ENCODE measurements at regions of chr2 and their contacts with region 1.

Region 1: DNA sequence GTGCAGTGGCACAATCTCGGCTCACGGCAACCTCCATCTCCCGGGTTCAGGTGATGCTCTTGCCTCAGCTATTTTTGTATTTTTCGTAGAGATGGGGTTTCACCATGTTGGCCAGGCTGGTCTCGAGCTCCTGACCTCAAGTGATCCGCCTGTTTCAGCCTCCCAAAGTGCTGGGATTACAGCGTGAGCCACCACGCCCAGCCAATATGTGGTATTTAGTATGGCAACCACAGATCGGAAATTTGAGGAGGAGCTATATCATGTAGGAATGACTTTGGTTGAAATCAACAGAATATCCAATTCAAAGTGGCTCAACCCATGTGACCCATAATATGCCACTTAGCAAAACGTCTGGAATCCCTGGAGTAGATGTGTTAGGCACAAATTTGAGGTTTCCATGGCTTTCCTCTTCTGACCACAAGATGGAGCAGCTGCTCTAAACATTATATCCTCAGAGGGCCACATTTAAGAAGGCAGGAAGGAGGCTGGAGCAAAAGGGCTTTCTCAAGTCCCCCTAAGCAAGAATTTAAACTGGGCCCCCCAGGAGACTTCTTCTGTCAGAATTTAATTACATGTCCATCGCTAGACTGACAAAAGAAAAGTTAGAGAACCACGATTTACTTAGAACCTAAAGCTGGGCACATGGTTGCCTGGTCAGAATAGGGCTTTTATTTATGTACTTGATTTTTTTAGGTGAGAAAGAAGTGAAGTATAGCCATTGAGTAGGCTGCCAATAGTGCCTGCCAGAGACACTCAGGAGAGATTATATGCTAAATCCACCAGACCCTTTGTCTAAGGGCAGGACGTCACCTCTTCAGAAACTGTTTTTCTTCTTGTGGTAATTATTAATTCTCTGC is 49.6 kb upstream of the ITSN2 start:
- DNase-seq: peak; percentile 43
- H3K4me3 ChIP-seq: no peak overlapping the region
- H3K27ac ChIP-seq: no peak overlapping the region
- H3K27me3 ChIP-seq: peaks cover 4% of the 10 kb centered on the region
- CTCF ChIP-seq: peak; percentile 92

Region 2: GRCh38 chr2:24399434-24400206 is 10.3 kb before region 1 on chr2:
- CTCF ChIA-PET with region 1: interaction called, 10 read pairs
- POLR2A ChIA-PET with region 1: no interaction called
- DNase-seq: no peak
- H3K4me3 ChIP-seq: no peak overlapping the region
- H3K27ac ChIP-seq: no peak overlapping the region
- H3K27me3 ChIP-seq: peaks cover 10% of the 10 kb centered on the region
- CTCF ChIP-seq: no peak

Region 3: GRCh38 chr2:24421668-24422067 is 11.7 kb after region 1 on chr2:
- CTCF ChIA-PET with region 1: interaction called, 28 read pairs
- POLR2A ChIA-PET with region 1: no interaction called
- DNase-seq: no peak
- H3K4me3 ChIP-seq: no peak overlapping the region
- H3K27ac ChIP-seq: no peak overlapping the region
- H3K27me3 ChIP-seq: peaks cover 5% of the 10 kb centered on the region
- CTCF ChIP-seq: peak; percentile 49

Region 4: GRCh38 chr2:24792874-24793760 is 383.2 kb after region 1 on chr2 and contains the starts of genes CENPO and PTRHD1:
- CTCF ChIA-PET with region 1: interaction called, 11 read pairs
- POLR2A ChIA-PET with region 1: no interaction called
- DNase-seq: peak; percentile 93
- H3K4me3 ChIP-seq: peak within 1 kb of the TSS; percentile 97
- H3K27ac ChIP-seq: peak within 1 kb of the TSS; percentile 94
- H3K27me3 ChIP-seq: no peaks in the 10 kb centered on the region
- CTCF ChIP-seq: peak; percentile 69
- polyA plus RNA-seq, gene CENPO: 12.1 and 15.7 TPM in 2 replicates
- polyA plus RNA-seq, gene PTRHD1: 42.5 and 51.5 TPM in 2 replicates

Region 5: DNA sequence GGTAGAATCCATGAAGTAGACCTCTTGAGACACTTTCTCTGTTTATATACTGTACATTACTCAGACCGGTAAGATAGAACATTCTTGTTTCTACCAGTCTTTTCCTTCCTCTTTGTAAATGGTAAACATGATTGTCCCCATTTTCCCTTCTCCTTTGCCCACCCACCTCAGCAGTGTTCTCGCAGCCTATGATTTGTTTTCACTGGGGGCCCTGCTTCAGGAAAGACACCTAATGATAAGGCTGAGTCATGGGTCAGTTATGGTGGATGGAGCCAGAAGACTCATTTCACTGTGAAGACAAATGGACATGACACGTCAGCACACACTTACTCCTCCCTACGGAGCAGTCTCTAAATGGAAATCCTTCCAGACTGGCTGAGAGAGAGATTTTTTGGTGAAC is 407.0 kb after region 1 on chr2:
- CTCF ChIA-PET with region 1: interaction called, 12 read pairs
- POLR2A ChIA-PET with region 1: no interaction called
- DNase-seq: peak; percentile 56
- H3K4me3 ChIP-seq: no peak overlapping the region
- H3K27ac ChIP-seq: peak overlapping the region; percentile 62
- H3K27me3 ChIP-seq: no peaks in the 10 kb centered on the region
- CTCF ChIP-seq: no peak

Region 6: GRCh38 chr2:24827321-24828237 is 417.7 kb after region 1 on chr2:
- CTCF ChIA-PET with region 1: interaction called, 145 read pairs
- POLR2A ChIA-PET with region 1: no interaction called
- DNase-seq: peak; percentile 81
- H3K4me3 ChIP-seq: no peak overlapping the region
- H3K27ac ChIP-seq: no peak overlapping the region
- H3K27me3 ChIP-seq: no peaks in the 10 kb centered on the region
- CTCF ChIP-seq: peak; percentile 95

Region 7: DNA sequence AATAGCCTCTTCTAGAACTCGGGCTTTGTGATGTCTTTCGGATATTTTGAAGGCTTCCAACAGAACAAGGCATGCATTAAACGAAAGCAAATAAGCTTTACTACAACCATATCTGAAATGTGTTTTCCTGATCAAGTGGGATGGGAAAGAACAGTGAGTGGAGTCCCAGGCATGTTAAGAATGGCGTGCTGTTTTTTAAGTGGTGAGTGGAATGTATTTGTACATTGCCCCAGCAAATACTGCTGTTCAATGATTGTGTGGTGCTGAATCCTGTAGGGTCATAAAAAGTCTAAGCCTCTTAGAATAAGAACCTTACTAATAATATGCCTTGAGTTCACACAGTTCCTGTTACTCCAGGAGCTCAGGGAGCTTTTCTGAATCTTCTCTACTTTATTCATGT is 706.0 kb after region 1 on chr2:
- CTCF ChIA-PET with region 1: no interaction called
- POLR2A ChIA-PET with region 1: no interaction called
- DNase-seq: peak; percentile 23
- H3K4me3 ChIP-seq: no peak overlapping the region
- H3K27ac ChIP-seq: no peak overlapping the region
- H3K27me3 ChIP-seq: peaks cover 2% of the 10 kb centered on the region
- CTCF ChIP-seq: no peak

Region 8: DNA sequence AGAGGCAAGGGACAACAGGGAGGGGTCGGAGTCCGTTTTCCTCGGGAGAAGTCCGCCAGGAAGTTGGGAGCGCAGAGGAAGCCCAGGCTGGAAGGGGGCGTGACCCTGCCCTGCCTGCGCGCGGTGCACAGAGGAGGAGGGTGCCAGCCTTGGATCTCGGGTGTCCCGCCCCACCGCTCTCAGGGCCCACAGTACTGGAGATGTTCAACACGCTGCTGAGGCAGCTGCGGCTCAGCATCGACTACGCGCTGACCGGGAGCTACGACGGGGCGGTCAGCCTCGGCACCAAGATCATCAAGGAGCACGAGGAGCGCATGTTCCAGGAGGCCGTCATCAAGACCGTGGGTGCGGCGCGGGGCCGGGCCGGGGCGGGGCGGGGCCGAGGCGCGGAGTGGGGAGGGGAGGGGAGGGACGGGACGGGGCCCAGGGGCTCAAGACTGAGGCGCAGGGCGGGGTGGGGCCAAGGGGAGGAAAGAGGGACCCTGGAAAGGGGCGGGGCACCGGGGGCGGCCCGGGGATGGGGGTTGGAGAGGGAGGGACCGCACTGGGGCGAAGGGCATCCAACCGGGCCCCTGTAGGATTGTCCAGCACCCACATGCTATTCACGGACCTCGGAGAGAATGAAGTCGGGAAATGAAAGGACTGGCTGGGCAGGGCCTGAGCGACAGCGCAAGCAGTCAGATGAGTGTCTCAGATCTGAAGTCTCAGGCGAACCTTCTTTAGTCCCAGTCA is 721.8 kb after region 1 on chr2:
- CTCF ChIA-PET with region 1: interaction called, 13 read pairs
- POLR2A ChIA-PET with region 1: no interaction called
- DNase-seq: no peak
- H3K4me3 ChIP-seq: no peak overlapping the region
- H3K27ac ChIP-seq: peak overlapping the region; percentile 21
- H3K27me3 ChIP-seq: peaks cover 20% of the 10 kb centered on the region
- CTCF ChIP-seq: no peak

Measured in AG04450 (cell line).